ENCODE measurements at regions of chr6 and their contacts with region 1.

Region 1: DNA sequence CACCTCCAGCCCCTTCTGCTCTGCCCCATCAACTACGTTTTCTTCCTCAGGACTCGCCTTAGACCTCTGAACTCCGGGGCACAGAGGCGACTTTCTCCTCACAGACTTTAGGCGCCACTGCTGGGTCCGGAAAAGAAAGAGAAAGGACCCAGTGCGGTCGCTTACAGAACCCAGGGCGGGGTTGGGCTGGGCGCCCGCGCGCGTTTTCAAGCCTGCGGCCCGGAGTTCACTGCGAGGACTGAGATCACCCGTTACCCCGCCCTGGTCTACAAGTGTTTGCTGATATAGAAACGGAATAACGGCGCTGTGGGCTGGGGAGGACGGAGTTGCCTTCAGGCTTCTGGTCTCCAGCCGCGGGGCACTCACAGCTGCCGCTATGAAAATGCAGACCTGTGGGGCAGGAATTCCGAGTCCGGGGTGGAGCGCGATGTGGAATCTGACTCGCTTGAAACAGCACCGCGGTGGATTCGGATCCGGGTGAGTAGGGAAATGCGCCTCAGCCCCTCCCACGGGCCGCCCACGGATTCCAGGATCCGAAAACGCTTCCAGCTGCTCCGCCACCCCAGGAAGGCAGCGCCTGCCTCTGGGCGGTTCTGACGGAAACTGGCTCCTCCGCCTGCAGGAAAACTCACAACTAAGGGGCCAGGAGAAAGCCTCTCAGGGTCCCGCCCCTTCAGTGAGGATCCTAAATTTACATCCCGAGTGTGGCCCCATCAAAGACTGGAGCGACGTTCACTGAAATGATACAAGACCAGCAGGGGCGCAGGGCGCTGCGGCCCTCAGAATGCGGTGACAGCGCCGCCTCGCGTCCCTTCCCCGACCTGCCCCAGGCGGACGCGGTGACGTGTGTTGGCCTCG is 29.4 kb downstream of the HLA-F start:
- DNase-seq: peak; percentile 93
- ATAC-seq: peak; percentile 80
- H3K4me3 Mint-ChIP-seq: peak overlapping the region; percentile 83
- H3K27ac Mint-ChIP-seq: peak overlapping the region; percentile 89
- H3K4me1 Mint-ChIP-seq: peaks cover 23% of the 10 kb centered on the region
- H3K27me3 Mint-ChIP-seq: no peaks in the 10 kb centered on the region

Region 2: GRCh38 chr6:29792123-29793035 is 39.7 kb after region 1 on chr6:
- CTCF ChIA-PET with region 1: no interaction called
- POLR2A ChIA-PET with region 1: no interaction called
- intact Hi-C with region 1: loop called in 1 of 2 experiments (anchors 2 kb)
- DNase-seq: peak; percentile 82
- ATAC-seq: peak; percentile 86
- H3K4me3 Mint-ChIP-seq: peak overlapping the region; percentile 62
- H3K27ac Mint-ChIP-seq: no peak overlapping the region
- H3K4me1 Mint-ChIP-seq: peaks cover 12% of the 10 kb centered on the region
- H3K27me3 Mint-ChIP-seq: peaks cover 34% of the 10 kb centered on the region

Region 3: DNA sequence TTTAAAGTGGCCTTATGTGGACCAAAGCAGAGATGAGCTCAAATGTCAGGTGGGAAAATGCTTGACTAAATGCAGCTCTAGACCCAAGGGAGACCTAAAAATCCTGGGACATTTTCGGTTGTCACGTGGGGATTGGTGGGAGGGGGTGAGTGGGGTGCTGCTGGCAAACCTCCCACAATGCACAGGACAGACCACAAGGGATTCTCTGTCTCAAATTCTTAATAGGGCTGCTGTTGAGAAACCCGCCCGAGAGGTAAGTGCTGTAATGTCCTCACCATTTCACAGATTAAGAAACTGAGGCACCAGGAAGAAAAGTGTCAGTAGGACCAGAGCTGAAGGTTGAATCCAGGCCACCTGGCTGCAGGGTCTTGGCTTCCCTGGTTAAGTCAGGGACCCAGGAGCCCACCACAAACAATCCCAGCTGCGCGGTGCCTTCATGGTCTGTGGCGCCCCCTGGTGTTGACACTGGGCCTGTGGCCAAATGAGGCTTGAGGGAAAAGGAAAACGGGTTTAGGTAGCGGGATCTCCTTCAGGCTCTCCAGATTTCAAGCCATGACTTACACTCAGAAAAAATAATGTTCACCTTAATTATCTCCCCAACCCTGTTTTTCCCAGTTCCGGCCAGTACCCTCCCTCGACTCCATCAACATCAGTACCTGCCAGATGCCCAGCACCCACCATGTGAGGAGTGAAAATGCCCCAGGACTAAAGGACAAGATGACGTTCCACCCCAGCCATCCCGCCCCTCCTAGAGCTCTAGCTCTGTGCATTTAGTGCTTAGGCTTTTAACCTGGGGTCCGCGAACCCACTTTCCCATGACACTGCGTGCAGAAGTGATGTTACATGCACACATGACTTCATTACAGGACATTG is 82.1 kb after region 1 on chr6:
- CTCF ChIA-PET with region 1: interaction called, 4 read pairs
- POLR2A ChIA-PET with region 1: no interaction called
- intact Hi-C with region 1: loop called in 1 of 2 experiments (anchors 5 kb)
- DNase-seq: peak; percentile 72
- ATAC-seq: no peak
- H3K4me3 Mint-ChIP-seq: no peak overlapping the region
- H3K27ac Mint-ChIP-seq: no peak overlapping the region
- H3K4me1 Mint-ChIP-seq: peaks cover 2% of the 10 kb centered on the region
- H3K27me3 Mint-ChIP-seq: peaks cover 44% of the 10 kb centered on the region